ENCODE measurements at regions of chr3 and their contacts with region 1.

Region 1: DNA sequence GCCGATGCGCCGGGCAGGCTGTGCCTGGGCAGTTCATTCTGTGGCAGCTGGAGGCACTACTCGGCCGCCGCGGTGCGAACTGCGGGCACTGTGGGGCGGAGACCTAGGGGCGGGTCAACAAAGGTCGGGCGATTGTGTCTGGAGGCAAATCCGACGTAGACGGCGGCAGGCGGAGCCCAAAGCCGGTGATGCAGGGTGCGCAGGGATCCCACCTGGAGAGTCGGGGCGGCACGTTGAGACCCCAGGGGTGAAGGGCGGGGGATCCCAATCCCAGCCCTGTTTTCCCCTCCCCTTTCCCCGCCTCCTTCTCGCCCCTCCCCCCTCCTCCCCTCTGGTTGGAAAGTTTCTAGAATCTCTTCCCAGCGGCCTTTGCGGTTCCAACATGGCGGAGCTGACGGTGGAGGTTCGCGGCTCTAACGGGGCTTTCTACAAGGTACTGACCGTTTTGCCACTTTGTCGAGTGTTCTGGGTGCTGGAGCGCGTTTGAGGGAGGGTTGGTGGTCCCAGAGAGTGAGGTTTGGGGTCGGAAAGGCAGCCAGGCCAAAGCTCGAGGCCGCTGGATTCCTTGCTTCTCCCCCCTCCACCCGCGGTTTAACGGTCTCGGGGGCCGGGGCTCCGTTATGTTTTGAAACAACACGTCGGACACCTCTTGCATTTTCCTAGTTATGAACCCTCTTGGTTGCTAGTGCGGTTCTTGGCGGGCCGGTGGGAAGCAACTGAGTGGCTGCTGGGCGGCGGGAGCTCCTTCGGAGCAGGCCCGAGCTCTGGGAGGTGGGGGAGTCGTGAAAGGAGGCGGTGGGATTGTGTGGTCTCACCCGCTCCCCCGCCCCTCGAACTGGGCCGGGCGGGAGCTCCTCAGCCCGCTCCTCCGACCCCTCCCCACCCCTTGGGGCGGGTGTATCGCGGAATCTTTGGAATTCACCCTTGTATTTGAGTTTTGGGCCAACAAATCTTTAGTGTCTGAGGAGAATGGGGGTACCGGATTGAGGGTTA is at the start of gene FXR1:
- DNase-seq: peak; percentile 96
- ATAC-seq: peak; percentile 94
- H3K4me3 Mint-ChIP-seq: peak within 1 kb of the TSS; percentile 100
- H3K27ac Mint-ChIP-seq: peak within 1 kb of the TSS; percentile 100
- H3K4me1 Mint-ChIP-seq: peaks cover 43% of the 10 kb centered on the region
- H3K27me3 Mint-ChIP-seq: no peaks in the 10 kb centered on the region
- CTCF ChIP-seq: no peak
- total RNA-seq, gene FXR1: 245 to 252 TPM (median 251 TPM) in 3 replicates

Region 2: GRCh38 chr3:180804916-180805315 is 107.7 kb before region 1 on chr3:
- CTCF ChIA-PET with region 1: interaction called, 10 read pairs
- POLR2A ChIA-PET with region 1: interaction called, 8 read pairs
- DNase-seq: peak; percentile 67
- ATAC-seq: peak; percentile 100
- H3K4me3 Mint-ChIP-seq: peak overlapping the region; percentile 12; the same call in 1 of the 2 replicates
- H3K27ac Mint-ChIP-seq: peak overlapping the region; percentile 76
- H3K4me1 Mint-ChIP-seq: peaks cover 16% of the 10 kb centered on the region
- H3K27me3 Mint-ChIP-seq: no peaks in the 10 kb centered on the region
- CTCF ChIP-seq: no peak

Region 3: GRCh38 chr3:180855364-180855763 is 57.2 kb before region 1 on chr3:
- CTCF ChIA-PET with region 1: interaction called, 10 read pairs
- POLR2A ChIA-PET with region 1: no interaction called
- DNase-seq: peak; percentile 68
- ATAC-seq: peak; percentile 96
- H3K4me3 Mint-ChIP-seq: no peak overlapping the region
- H3K27ac Mint-ChIP-seq: no peak overlapping the region
- H3K4me1 Mint-ChIP-seq: peaks cover 19% of the 10 kb centered on the region
- H3K27me3 Mint-ChIP-seq: no peaks in the 10 kb centered on the region
- CTCF ChIP-seq: 0 out of 2 replicates have a peak, but pooled peaks have one; percentile 21

Region 4: GRCh38 chr3:180898572-180898971 is 14.0 kb before region 1 on chr3:
- CTCF ChIA-PET with region 1: interaction called, 12 read pairs
- POLR2A ChIA-PET with region 1: no interaction called
- DNase-seq: no peak
- ATAC-seq: no peak
- H3K4me3 Mint-ChIP-seq: no peak overlapping the region
- H3K27ac Mint-ChIP-seq: no peak overlapping the region
- H3K4me1 Mint-ChIP-seq: peaks cover 4% of the 10 kb centered on the region; the same call in 1 of the 2 replicates
- H3K27me3 Mint-ChIP-seq: no peaks in the 10 kb centered on the region
- CTCF ChIP-seq: no peak

Region 5: DNA sequence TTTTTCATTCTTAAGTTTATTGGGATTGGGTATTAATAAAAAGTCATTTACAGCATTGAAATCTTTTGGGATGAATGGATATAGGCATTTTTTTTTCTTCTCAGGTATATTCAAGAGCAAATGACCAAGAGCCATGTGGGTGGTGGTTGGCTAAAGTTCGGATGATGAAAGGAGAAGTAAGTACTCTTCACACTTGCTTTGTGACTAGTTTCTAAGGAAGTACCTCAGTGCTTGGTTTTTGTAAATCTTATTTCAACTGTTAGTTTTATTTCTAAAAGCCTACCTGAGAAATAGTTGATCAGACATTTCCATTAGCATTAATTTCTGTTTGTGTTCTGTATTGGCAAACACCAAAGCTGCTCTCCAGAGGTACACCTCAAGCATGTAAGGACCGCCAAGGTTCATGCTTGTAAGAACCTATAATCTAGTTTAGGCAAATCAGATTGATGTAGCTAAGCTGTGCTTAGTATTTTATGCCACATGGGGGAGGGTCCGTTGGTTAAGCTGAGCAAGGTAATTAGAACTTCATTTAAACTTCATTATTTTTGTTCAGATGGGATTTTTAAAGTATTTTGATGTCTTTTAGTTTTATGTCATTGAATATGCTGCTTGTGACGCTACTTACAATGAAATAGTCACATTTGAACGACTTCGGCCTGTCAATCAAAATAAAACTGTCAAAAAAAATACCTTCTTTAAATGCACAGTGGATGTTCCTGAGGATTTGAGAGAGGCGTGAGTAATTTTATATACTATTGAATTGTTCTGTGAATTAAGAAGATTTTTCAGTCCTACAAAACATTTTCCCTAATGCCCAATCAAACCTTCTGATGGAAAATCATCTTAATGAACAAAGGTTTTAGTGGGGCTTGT is 35.4 kb after region 1 on chr3:
- CTCF ChIA-PET with region 1: interaction called, 10 read pairs
- POLR2A ChIA-PET with region 1: no interaction called
- DNase-seq: no peak
- ATAC-seq: no peak
- H3K4me3 Mint-ChIP-seq: no peak overlapping the region
- H3K27ac Mint-ChIP-seq: no peak overlapping the region; the same call in 1 of the 2 replicates
- H3K4me1 Mint-ChIP-seq: no peaks in the 10 kb centered on the region
- H3K27me3 Mint-ChIP-seq: no peaks in the 10 kb centered on the region
- CTCF ChIP-seq: no peak

Region 6: DNA sequence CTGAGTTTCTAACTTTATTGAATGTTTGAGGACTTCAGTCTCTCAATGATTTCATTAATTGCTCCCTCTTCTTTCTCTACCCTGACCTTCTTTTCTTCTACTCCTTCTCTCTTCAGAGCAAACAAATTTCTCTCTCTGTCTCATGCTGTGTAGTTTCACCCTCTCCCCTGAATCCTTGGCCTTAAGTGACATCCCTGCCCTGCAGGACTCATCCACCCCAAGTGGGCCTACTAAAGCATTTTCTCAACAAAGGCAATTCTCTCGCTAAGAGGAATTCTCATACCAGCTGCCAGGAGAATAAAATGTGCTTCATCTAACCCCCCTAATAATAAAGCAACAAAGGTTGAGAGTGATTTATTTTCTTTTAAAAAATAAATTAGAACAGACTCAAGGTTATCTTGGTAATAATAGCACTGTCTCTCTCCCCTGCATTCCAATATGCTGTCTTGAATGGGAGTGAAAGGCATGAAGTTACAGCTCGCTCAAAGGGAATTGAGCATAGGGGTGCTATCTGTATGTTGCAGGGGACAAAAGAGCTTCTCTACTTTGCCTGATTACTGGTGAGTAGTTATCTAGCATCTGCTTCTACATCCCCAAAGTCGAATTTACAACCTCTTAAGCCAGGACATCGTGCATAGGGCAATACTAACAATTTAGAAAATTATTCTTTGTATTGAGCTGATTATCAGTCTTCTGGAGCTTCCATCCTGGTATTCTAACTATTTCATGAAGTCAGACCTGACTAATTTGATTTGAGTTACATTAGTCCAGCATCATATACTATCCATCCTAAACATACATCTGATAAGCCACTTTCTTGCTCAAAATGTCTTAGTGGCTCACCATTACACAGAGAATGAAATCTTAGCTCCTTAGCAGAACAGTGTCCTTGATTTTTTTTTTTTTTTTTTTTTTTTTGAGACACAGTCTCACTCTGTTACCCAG is 153.8 kb after region 1 on chr3:
- CTCF ChIA-PET with region 1: no interaction called
- POLR2A ChIA-PET with region 1: no interaction called
- DNase-seq: no peak
- ATAC-seq: peak; percentile 48
- H3K4me3 Mint-ChIP-seq: no peak overlapping the region
- H3K27ac Mint-ChIP-seq: peak overlapping the region; percentile 42
- H3K4me1 Mint-ChIP-seq: peaks cover 14% of the 10 kb centered on the region
- H3K27me3 Mint-ChIP-seq: no peaks in the 10 kb centered on the region
- CTCF ChIP-seq: no peak

Measured in WTC11 (cell line).